ENCODE measurements at regions of chr4 and their contacts with region 1.

Region 1: GRCh38 chr4:28799696-28800095 is 1920.5 kb upstream of the PCDH7 start:
- DNase-seq: peak; percentile 76

Region 2: DNA sequence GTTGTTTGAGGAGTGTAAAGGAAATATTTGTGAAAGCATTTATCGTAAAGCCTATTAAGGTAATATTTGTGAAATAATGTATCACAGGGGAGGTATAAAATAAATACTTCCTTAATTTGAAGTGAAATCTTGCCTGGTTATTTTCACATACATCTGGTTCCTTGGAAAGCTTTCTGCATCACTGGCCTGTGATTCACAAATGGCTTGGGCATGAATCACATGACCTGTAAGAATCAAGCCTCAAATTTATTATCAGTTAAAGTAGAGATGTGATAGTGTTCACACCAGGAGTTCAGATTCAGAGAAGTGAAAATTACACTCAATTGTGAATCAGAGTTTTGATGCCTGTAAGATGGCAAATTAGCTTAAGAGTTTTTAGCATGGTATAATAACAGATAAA is 27.6 kb before region 1 on chr4:
- intact Hi-C with region 1: loop called (anchors 2 kb)
- DNase-seq: no peak

Measured in cardiac septum (tissue), 1 donor.